Activated CD4-positive, alpha-beta memory T cell treated with anti-CD3 and anti-CD28 coated beads for 36 hours (primary cell): ENCODE measurements at regions of chr14 and their contacts with region 1.

Region 1: GRCh38 chr14:21014761-21015190 is 10.1 kb downstream of the NDRG2 start:
- DNase-seq: peak; percentile 85
- H3K4me3 Mint-ChIP-seq: no peak overlapping the region
- H3K27ac Mint-ChIP-seq: no peak overlapping the region
- H3K4me1 Mint-ChIP-seq: no peaks in the 10 kb centered on the region
- H3K27me3 Mint-ChIP-seq: peaks cover 2% of the 10 kb centered on the region

Region 2: GRCh38 chr14:20989572-20990551 is 24.9 kb before region 1 on chr14 and contains the start of gene METTL17:
- CTCF ChIA-PET with region 1: interaction called, 70 read pairs
- POLR2A ChIA-PET with region 1: no interaction called
- intact Hi-C with region 1: no loop called
- DNase-seq: peak; percentile 94
- H3K4me3 Mint-ChIP-seq: peak within 1 kb of the TSS; percentile 91
- H3K27ac Mint-ChIP-seq: peak within 1 kb of the TSS; percentile 84
- H3K4me1 Mint-ChIP-seq: peaks cover 30% of the 10 kb centered on the region
- H3K27me3 Mint-ChIP-seq: no peaks in the 10 kb centered on the region
- total RNA-seq, gene METTL17: 74.9 to 78.9 TPM

Region 3: GRCh38 chr14:21024585-21025370 is 10.0 kb after region 1 on chr14 and contains the start of gene NDRG2:
- CTCF ChIA-PET with region 1: interaction called, 21 read pairs
- POLR2A ChIA-PET with region 1: no interaction called
- intact Hi-C with region 1: no loop called
- DNase-seq: peak; percentile 76
- H3K4me3 Mint-ChIP-seq: peak within 1 kb of the TSS; percentile 73
- H3K27ac Mint-ChIP-seq: no peak within 1 kb of the TSS
- H3K4me1 Mint-ChIP-seq: peaks cover 9% of the 10 kb centered on the region
- H3K27me3 Mint-ChIP-seq: no peaks in the 10 kb centered on the region
- total RNA-seq, gene NDRG2: 7.7 to 9.6 TPM

Region 4: DNA sequence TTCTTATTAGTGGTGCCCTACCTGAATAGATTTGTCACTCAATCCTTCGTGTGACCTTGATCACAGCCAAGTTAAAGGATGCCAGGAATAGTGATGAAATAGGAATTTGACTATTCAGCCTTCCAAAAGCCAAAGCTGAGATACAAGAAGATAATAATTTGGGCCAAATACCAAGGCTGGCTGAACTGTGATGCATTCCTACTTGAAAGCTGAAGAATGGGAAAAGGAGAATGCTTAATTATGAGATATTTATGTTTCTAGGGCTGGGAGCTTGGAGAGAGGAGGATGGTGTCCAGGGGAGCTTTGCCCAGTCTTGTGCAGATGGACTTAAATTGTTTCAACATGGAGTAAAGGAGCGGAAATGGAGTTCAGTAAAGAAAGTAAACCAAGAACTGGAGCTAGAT is 32.6 kb after region 1 on chr14:
- CTCF ChIA-PET with region 1: interaction called, 35 read pairs
- POLR2A ChIA-PET with region 1: no interaction called
- intact Hi-C with region 1: no loop called
- DNase-seq: no peak
- H3K4me3 Mint-ChIP-seq: no peak overlapping the region
- H3K27ac Mint-ChIP-seq: no peak overlapping the region
- H3K4me1 Mint-ChIP-seq: peaks cover 12% of the 10 kb centered on the region
- H3K27me3 Mint-ChIP-seq: peaks cover 5% of the 10 kb centered on the region

Region 5: DNA sequence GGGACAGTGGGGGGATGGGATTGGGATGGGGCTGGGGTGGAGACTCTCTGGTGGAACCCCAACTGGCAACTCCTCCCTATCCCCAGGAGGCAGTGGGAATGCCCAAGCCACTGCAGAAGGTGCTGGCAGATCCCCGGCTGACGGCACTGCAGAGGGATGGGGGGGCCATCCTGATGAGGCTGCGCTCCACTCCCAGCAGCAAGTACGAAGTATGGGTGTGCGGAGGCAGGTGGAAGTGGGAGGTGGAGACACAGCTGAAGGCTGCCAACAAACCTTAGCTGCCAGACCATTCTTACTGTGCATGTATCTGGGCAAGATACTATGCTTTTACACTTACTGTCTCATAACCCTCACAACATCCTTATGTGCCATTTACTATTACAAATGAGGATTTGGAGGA is 63.5 kb after region 1 on chr14:
- CTCF ChIA-PET with region 1: interaction called, 146 read pairs
- POLR2A ChIA-PET with region 1: no interaction called
- intact Hi-C with region 1: no loop called
- DNase-seq: no peak
- H3K4me3 Mint-ChIP-seq: no peak overlapping the region
- H3K27ac Mint-ChIP-seq: no peak overlapping the region
- H3K4me1 Mint-ChIP-seq: no peaks in the 10 kb centered on the region
- H3K27me3 Mint-ChIP-seq: no peaks in the 10 kb centered on the region

Region 6: GRCh38 chr14:21136024-21136423 is 121.2 kb after region 1 on chr14:
- CTCF ChIA-PET with region 1: interaction called, 19 read pairs
- POLR2A ChIA-PET with region 1: no interaction called
- intact Hi-C with region 1: loop called (anchors 1 kb)
- DNase-seq: no peak
- H3K4me3 Mint-ChIP-seq: no peak overlapping the region
- H3K27ac Mint-ChIP-seq: no peak overlapping the region
- H3K4me1 Mint-ChIP-seq: no peaks in the 10 kb centered on the region
- H3K27me3 Mint-ChIP-seq: no peaks in the 10 kb centered on the region